Dendritic cell treated with granulocyte-macrophage colony-stimulating factor and Interleukin-4, amounts not matched to agents 40 ng/mL and 50 ng/mL, for 4 days (primary cell): ENCODE measurements at regions of chr17 and their contacts with region 1.

Region 1: GRCh38 chr17:68771867-68772515 is 170.8 kb upstream of the FAM20A start:
- H3K4me3 Mint-ChIP-seq: peak overlapping the region; percentile 60
- H3K27ac Mint-ChIP-seq: peak overlapping the region; percentile 83
- H3K4me1 Mint-ChIP-seq: peaks cover 26% of the 10 kb centered on the region
- H3K27me3 Mint-ChIP-seq: peaks cover 1% of the 10 kb centered on the region

Region 2: GRCh38 chr17:68674029-68674940 is 97.7 kb before region 1 on chr17:
- intact Hi-C with region 1: no loop called
- H3K4me3 Mint-ChIP-seq: no peak overlapping the region
- H3K27ac Mint-ChIP-seq: no peak overlapping the region
- H3K4me1 Mint-ChIP-seq: no peaks in the 10 kb centered on the region
- H3K27me3 Mint-ChIP-seq: peaks cover 19% of the 10 kb centered on the region

Region 3: DNA sequence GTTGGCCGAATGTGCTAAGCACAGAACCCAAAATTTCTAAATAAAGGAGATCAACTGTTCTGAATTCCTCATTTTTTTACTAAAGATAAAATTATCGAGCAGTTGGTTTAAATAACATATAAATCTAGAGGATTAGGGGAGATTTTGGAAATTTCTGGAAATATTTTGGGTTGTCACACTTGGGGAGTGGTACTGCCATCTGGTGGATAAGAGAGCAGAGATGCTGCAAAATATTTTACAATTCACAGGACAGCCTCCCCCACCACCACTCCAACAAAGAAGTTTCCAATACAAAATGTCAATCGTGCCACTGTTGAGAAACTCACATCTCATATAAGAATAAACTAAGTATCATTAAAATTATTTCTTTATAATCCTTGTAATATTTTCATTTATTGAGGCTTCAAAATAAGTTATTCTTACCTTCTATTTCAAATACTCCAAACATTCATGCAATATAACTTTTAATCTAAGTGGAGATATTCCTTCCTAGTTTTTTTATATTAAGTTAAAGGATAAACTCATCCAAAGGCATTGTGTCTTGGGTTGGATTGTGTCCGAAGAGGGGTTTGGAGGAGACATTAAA is 200.2 kb after region 1 on chr17:
- intact Hi-C with region 1: loop called (anchors 1 kb)
- H3K4me3 Mint-ChIP-seq: no peak overlapping the region
- H3K27ac Mint-ChIP-seq: no peak overlapping the region
- H3K4me1 Mint-ChIP-seq: peaks cover 34% of the 10 kb centered on the region
- H3K27me3 Mint-ChIP-seq: peaks cover 4% of the 10 kb centered on the region

Region 4: GRCh38 chr17:69093279-69093789 is 321.3 kb after region 1 on chr17:
- intact Hi-C with region 1: loop called (anchors 10 kb)
- H3K4me3 Mint-ChIP-seq: peak overlapping the region; percentile 32
- H3K27ac Mint-ChIP-seq: peak overlapping the region; percentile 90
- H3K4me1 Mint-ChIP-seq: peaks cover 53% of the 10 kb centered on the region
- H3K27me3 Mint-ChIP-seq: no peaks in the 10 kb centered on the region

Region 5: GRCh38 chr17:69123626-69124025 is 351.6 kb after region 1 on chr17:
- intact Hi-C with region 1: loop called (anchors 10 kb)
- H3K4me3 Mint-ChIP-seq: no peak overlapping the region
- H3K27ac Mint-ChIP-seq: no peak overlapping the region
- H3K4me1 Mint-ChIP-seq: peaks cover 37% of the 10 kb centered on the region
- H3K27me3 Mint-ChIP-seq: no peaks in the 10 kb centered on the region

Region 6: DNA sequence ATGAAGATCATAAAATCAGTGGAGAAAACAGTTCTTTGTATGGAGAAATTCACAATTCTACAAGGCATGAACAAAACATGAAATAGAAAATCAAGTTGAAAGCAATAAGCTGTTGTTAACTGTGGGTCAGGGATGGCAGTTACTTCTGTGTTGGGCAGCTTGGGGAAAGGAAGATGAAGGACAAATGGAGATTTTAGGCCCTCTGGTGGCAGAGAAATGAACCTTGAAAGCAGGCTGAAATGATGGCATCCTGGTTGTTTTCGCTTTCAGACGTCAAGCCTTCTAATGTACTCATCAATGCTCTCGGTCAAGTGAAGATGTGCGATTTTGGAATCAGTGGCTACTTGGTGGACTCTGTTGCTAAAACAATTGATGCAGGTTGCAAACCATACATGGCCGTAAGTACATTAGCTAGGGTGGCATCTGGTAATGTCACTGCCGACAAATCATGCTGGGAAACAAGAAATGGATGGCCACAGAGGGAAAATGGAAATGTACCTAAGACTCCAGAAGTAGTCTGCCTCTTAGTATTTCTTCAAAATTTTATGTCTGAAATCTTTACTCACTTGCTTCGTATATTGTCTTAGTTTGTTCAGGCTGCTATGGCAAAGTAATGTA is 751.4 kb after region 1 on chr17:
- intact Hi-C with region 1: loop called (anchors 5 kb)
- H3K4me3 Mint-ChIP-seq: no peak overlapping the region
- H3K27ac Mint-ChIP-seq: no peak overlapping the region
- H3K4me1 Mint-ChIP-seq: no peaks in the 10 kb centered on the region
- H3K27me3 Mint-ChIP-seq: no peaks in the 10 kb centered on the region